WTC11 (cell line): ENCODE measurements at regions of chr1 and their contacts with region 1.

Region 1: DNA sequence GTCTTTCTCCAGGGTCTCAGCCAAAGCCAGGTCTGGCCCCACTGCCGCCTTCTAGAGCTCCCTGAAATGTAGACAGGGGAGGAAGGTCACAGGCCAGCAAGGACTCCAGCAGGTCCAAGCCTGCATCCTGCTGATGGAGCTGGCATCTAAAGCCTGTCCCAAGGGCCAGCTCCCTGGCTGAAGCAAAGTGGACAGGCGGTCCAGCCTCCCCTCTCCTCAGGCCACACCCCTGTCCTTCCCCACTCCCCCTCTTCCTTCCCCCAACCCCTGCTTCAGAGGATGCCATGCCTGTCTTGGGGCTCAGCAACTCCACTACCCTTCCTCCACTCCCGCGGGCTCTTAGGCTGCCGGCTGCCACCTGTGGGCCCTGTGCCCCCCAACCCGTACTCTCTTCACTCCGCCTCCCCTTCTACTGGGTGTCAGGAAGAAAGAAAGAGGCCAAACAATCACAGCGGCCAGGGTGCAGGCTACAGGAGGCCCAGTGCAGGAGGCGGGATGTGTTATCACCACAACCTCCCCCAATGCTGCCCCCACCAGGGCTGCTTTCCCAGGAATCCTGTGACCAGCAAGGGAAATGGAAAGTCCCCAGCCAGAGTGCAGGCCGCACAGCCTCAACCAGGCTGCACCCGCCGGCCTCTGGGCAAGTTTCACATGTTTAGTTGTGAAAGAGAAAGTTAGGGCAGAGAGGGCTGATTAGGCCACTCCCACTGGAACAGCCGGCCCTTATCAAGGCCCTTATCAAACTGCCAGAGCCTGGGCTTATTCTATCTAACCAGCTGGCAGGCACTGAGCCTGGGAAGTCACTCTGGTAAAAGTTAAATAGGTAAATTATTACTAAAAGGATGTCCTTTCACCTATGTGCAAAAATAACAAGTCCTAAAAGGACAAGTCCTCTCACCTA is 34.1 kb downstream of the ACOT7 start:
- DNase-seq: peak; percentile 42
- ATAC-seq: peak; percentile 11
- H3K4me3 Mint-ChIP-seq: no peak overlapping the region
- H3K27ac Mint-ChIP-seq: peak overlapping the region; percentile 76
- H3K4me1 Mint-ChIP-seq: peaks cover 44% of the 10 kb centered on the region
- H3K27me3 Mint-ChIP-seq: no peaks in the 10 kb centered on the region
- CTCF ChIP-seq: no peak

Region 2: GRCh38 chr1:6338695-6339094 is 20.8 kb before region 1 on chr1:
- CTCF ChIA-PET with region 1: interaction called, 11 read pairs
- POLR2A ChIA-PET with region 1: no interaction called
- DNase-seq: no peak
- ATAC-seq: no peak; the same call in 1 of the 2 replicates
- H3K4me3 Mint-ChIP-seq: no peak overlapping the region
- H3K27ac Mint-ChIP-seq: peak overlapping the region; percentile 32; the same call in 1 of the 2 replicates
- H3K4me1 Mint-ChIP-seq: peaks cover 28% of the 10 kb centered on the region
- H3K27me3 Mint-ChIP-seq: no peaks in the 10 kb centered on the region
- CTCF ChIP-seq: no peak

Region 3: GRCh38 chr1:6343506-6344405 is 15.7 kb before region 1 on chr1:
- CTCF ChIA-PET with region 1: interaction called, 54 read pairs
- POLR2A ChIA-PET with region 1: no interaction called
- DNase-seq: peak; percentile 91
- ATAC-seq: peak; percentile 92
- H3K4me3 Mint-ChIP-seq: no peak overlapping the region
- H3K27ac Mint-ChIP-seq: peak overlapping the region; percentile 60
- H3K4me1 Mint-ChIP-seq: peaks cover 14% of the 10 kb centered on the region
- H3K27me3 Mint-ChIP-seq: no peaks in the 10 kb centered on the region
- CTCF ChIP-seq: peak; percentile 94

Region 4: DNA sequence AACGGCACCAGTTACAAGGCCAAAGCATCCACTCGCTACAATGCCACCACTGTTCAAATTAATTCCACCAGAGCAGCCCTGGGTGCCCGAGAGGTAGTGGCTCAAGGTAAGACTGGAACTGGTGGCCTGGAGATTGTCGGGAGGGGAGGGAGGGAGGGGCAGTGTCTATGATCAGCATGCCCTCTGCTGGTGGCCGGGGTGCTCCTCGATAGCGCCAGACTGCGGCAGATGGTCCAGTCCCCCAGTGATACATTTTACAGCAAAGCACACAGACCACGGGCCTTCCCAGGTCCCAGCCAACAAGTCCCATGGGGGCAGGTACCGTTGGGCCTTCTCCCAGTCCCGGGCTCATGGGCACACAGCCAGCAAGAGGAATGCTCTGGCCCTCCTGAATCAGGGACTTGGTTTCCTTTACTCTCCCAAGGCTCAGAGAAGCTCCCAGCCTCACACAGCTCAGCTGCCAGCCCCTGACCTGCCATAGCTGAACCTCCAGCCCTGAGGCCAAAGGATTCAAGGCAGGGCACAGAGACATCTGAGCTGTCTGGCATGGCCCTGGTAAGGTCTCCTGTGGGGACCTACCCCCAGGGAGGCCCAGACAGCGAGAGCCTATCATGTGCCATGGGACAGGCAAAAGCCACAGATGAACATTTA is 18.8 kb after region 1 on chr1:
- CTCF ChIA-PET with region 1: interaction called, 16 read pairs
- POLR2A ChIA-PET with region 1: no interaction called
- DNase-seq: peak; percentile 60
- ATAC-seq: peak; percentile 90
- H3K4me3 Mint-ChIP-seq: no peak overlapping the region
- H3K27ac Mint-ChIP-seq: peak overlapping the region; percentile 89
- H3K4me1 Mint-ChIP-seq: peaks cover 7% of the 10 kb centered on the region
- H3K27me3 Mint-ChIP-seq: no peaks in the 10 kb centered on the region
- CTCF ChIP-seq: no peak

Region 5: DNA sequence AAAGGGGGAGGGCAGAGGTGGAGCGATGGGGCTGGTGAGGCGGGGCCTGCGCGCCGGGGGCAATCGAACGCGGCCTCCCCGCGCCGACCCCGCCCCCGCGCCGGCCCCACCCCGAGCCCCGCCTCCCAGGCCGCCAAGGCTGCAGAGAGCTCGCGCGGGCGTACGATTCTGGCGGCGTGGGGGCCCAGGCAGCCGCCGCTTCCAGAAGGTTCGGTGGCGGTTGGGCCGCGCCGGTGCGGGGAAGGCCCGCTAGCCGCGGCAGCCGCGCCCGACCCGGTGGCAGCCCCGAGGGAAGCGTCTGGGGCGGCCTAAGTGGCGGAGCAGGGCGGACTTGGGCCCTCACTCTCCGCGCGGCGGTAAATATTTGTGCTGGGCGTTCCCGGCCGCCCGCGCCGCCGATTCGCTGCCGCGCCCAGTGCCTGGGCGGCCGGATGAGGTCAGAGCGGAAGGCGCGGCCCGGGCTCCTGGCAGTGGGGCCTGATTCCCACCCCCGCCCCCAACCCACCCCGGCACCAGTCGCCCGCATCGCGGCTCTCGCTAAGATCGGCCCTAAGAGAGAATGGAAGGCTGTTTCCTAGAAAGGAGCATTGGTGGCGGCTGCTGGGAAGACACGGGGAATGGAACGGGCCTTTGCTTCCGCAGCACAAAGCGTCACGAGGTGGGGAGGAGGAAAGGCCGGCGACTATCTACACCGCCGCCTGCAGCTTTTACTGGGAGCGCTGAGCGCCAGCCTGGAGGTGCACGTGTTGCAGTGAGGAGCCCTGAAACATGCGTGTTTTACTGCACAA is 34.1 kb after region 1 on chr1 and contains the start of gene ACOT7:
- CTCF ChIA-PET with region 1: interaction called, 31 read pairs
- POLR2A ChIA-PET with region 1: no interaction called
- DNase-seq: peak; percentile 89
- ATAC-seq: peak; percentile 88
- H3K4me3 Mint-ChIP-seq: peak within 1 kb of the TSS; percentile 80
- H3K27ac Mint-ChIP-seq: peak within 1 kb of the TSS; percentile 95
- H3K4me1 Mint-ChIP-seq: peaks cover 18% of the 10 kb centered on the region
- H3K27me3 Mint-ChIP-seq: peaks cover 9% of the 10 kb centered on the region
- CTCF ChIP-seq: no peak
- total RNA-seq, gene ACOT7: 133 to 151 TPM (median 137 TPM) in 3 replicates

Region 6: DNA sequence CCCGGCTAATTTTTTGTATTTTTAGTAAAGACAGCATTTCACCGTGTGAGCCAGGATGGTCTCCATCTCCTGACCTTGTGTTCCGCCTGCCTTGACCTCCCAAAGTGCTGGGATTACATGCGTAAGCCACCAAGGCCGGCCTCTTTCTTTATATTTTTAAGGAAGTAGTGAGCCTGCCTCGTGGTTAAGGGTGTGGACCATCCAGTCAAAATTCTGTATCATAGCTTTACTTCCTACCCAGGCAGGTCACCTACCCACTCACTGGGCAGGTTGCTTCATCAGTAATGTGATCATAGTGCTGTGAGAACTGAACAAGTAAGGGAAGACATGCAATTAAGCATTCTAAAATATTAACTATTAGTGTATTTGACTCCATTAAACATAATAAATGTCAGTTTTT is 42.2 kb after region 1 on chr1:
- CTCF ChIA-PET with region 1: interaction called, 31 read pairs
- POLR2A ChIA-PET with region 1: no interaction called
- DNase-seq: no peak
- ATAC-seq: no peak
- H3K4me3 Mint-ChIP-seq: no peak overlapping the region
- H3K27ac Mint-ChIP-seq: no peak overlapping the region
- H3K4me1 Mint-ChIP-seq: no peaks in the 10 kb centered on the region
- H3K27me3 Mint-ChIP-seq: peaks cover 20% of the 10 kb centered on the region
- CTCF ChIP-seq: no peak

Region 7: GRCh38 chr1:6414443-6414844 is 55.0 kb after region 1 on chr1:
- CTCF ChIA-PET with region 1: interaction called, 26 read pairs
- POLR2A ChIA-PET with region 1: no interaction called
- DNase-seq: peak; percentile 86
- ATAC-seq: peak; percentile 89
- H3K4me3 Mint-ChIP-seq: peak overlapping the region; percentile 47
- H3K27ac Mint-ChIP-seq: peak overlapping the region; percentile 95
- H3K4me1 Mint-ChIP-seq: peaks cover 20% of the 10 kb centered on the region
- H3K27me3 Mint-ChIP-seq: peaks cover 78% of the 10 kb centered on the region
- CTCF ChIP-seq: peak; percentile 62; the same call in 1 of the 2 replicates